ENCODE measurements at regions of chr1 and their contacts with region 1.

Region 1: DNA sequence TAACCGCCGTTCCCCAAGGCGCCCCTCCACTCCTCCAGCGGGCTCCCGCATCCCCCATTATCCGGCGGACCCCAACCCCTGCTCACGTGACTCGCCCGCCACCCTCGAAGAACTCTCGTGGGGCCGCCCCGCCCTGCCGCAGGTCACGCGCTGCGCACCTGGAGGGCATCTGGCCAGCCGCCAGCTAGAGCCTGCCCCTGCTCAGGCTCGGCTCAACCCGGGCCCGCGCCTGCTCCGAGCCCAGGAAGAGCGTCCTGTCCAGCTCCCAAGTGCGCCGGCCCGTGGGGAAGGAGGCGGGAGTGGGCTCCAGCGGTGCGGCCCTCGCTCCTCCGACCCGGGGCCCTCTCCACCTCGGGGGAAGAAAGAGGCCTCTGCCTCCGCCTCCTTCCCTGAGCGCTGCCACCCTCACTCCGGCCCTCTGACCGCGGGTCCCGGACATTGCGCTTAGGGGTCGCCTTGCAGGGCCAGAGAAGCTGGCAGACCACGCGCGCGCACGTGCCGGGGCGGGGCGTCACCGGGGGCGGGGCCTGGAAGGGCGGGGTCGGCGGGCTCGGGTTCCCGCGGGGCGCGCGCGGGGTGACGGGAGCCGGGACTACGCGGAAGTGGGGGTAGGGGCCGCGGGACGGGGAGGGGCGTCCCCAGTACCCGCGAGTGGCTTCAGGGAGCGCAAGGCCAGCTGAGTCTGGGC is 28.4 kb downstream of the HMGN2 start:
- DNase-seq: peak; percentile 96
- CTCF ChIP-seq: no peak

Region 2: GRCh38 chr1:26482921-26483680 is 17.5 kb before region 1 on chr1:
- CTCF ChIA-PET with region 1: interaction called, 26 read pairs
- POLR2A ChIA-PET with region 1: interaction called, 4 read pairs
- DNase-seq: no peak
- CTCF ChIP-seq: no peak

Region 3: DNA sequence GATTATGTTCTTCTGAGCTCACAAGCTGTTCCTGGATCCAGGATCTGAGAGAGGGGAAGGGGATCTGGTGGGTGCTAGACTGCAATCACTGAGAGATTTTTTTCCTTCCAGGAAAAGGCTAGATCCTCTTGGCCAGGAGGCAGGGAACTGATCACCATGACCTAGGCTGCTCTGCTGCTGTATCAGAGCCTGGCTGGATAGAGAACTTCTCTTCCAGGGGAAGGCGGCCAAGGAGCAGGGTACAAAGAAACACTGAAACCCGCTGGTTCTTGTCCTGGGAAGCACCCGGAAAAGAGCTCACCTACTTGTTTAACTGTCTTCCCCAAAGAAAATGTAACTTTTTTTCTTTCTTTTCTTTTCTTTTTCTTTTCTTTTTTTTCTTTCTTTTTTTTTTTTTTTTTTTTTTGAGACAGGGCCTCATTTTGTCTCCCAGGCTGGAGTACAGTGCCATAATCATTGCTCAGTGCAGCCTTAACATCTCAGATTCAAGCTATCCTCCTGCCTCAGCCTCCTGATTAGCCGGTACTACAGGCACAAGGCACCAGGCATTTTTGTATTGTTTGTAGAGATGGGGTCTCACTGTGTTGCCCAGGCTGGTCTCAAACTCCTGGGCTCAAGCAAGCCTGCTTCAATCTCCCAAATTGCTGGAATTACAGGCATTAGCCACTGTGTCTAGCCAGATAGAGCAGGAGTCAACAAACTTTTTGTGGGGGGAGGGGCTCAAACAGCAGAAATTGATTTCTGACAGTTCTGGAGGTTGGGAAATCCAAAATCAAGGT is 16.5 kb after region 1 on chr1:
- CTCF ChIA-PET with region 1: interaction called, 17 read pairs
- POLR2A ChIA-PET with region 1: no interaction called
- DNase-seq: no peak
- CTCF ChIP-seq: no peak

Region 4: DNA sequence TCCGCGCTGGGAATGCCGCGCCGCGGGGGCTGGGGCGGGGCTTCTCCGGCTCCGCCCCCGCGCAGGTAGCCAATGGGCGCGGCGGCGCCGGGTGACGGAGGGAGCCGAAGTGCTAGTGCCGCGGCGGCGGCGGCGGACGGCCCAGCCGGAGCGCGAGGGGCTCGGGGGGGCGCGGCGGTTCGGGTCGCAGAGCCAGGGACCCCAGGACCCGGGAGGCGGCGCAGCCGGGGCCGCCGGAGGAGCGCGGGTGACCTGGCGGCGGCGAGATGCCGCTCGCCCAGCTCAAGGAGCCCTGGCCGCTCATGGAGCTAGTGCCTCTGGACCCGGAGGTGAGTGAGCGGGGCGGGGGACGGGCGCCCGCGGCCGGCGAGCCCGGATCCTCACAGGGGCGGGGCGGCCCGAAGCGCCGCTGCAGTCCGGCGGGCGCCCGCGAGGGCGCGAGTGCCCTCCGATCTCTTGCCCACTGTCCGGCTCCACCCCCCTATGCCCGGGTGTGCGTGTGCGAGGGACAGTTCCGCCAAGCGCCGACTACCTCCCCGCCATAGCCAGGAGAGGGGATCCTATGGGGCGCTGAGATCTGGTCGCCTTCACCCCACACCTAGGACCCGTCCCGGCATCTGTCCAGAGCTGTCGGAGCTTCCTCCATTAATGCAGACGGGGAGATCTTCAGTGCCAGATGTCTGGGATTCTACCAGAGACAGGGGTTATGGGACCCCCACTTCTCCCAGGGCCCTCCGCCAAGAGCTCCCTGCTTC is 29.2 kb after region 1 on chr1 and contains the start of gene RPS6KA1:
- CTCF ChIA-PET with region 1: interaction called, 47 read pairs
- POLR2A ChIA-PET with region 1: no interaction called
- DNase-seq: peak; percentile 91
- CTCF ChIP-seq: no peak

Measured in GM10248 (cell line).